Activated B cell treated with CpG ODN at 0.5 μM for 24 hours (primary cell): ENCODE measurements at regions of chr11 and their contacts with region 1.

Region 1: DNA sequence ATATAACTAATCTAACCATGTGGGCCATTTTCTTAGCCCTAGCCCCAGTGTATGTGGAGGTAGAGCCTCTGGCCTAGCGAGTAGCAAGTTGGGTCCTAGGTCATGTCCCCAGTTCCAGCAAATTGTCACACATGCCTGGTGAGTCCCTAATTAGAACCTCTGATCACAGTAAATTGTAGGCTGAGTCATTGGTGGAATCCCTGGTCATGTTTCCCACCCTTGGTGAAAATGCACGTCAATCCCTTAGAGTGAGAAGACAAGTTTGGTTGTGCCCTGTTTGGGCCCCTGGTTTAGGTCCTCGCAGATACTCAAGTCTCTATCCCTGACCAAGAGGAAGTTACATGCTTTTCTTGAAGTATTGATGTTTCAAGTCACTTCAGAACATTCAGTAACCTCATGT is 46.7 kb downstream of the ATM start:
- DNase-seq: no peak
- ATAC-seq: no peak
- H3K4me3 Mint-ChIP-seq: no peak overlapping the region
- H3K27ac Mint-ChIP-seq: peak overlapping the region; percentile 7
- H3K4me1 Mint-ChIP-seq: no peaks in the 10 kb centered on the region
- H3K27me3 Mint-ChIP-seq: no peaks in the 10 kb centered on the region
- CTCF ChIP-seq: no peak

Region 2: DNA sequence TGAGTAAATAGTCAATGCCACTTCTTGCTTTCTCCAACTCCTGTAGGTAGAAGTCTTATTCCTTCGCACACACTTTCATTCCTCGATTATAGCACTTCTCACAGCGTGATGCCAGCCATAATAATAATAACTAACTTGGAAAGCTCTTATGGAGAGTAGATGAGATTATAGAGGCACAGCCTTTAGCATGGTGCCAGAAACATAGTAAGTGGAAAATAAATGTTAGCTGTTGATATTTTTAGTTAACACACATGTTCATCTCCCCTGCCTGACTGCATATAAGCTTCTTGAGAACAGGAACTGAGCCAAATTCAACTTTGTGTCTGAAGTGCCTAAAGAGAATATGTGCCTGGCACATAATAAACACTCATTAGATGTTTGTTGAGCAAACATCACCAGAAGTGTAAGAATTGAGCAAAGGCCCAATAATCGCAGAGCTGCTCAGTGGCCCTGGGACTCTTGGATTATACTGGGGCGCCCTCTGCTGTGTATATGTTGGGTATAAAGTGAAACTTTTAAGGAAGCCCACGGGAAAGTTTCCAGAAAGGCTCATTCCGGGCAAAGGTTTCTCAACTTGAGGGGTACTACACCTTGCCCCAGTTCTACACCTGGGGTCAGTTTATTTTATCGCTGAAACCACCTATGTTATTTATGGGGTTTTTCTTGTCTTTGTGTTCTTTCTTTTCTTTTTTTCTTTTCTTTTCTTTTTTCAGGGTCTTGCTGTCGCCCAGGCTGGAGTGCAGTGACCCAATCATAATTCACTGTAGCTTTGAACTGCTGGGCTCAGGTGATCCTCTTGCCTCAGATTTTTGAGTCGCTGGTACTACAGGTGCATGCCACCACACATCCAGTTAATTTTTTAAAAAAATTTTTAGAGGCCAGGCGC is 580.0 kb before region 1 on chr11:
- CTCF ChIA-PET with region 1: no interaction called
- POLR2A ChIA-PET with region 1: no interaction called
- intact Hi-C with region 1: no loop called
- DNase-seq: peak; percentile 18
- ATAC-seq: peak; percentile 47
- H3K4me3 Mint-ChIP-seq: no peak overlapping the region
- H3K27ac Mint-ChIP-seq: no peak overlapping the region
- H3K4me1 Mint-ChIP-seq: peaks cover 3% of the 10 kb centered on the region
- H3K27me3 Mint-ChIP-seq: peaks cover 12% of the 10 kb centered on the region
- CTCF ChIP-seq: no peak

Region 3: DNA sequence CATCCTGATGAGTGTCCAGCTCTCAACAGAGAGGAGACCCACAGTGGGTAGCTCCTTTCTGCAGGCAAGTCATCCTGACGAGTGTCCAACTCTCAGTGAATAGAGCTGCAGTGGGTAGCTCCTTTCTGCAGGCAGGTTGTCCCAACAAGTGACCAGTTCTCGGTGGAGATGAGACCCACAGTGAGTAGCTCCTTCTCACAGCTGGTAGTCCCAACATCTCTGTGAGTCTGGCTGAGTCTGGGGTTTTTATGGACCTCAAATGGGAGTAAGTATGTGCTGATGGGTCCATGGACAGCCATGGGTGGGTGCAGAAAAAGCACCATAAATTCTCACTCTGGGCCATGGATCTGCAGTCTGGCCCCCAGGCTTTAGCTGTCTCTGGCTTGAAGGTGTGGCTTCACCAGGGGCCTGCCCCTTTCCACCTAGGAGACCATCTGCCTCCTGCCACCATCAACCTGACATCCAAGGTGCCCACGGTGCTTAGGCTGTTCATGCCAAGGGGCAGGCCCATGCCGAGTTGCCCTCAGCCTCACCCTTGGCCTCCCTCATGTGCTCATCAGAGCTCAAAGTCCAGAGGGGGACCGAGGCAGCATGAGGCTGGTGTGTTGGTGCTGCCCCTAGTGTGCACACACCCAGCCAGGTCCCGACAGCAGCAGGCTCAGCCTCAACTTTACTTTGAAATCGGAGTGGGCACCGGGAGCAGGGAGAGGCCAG is 62.5 kb before region 1 on chr11:
- CTCF ChIA-PET with region 1: no interaction called
- POLR2A ChIA-PET with region 1: no interaction called
- intact Hi-C with region 1: no loop called
- DNase-seq: no peak
- ATAC-seq: no peak
- H3K4me3 Mint-ChIP-seq: no peak overlapping the region
- H3K27ac Mint-ChIP-seq: no peak overlapping the region
- H3K4me1 Mint-ChIP-seq: peaks cover 22% of the 10 kb centered on the region
- H3K27me3 Mint-ChIP-seq: no peaks in the 10 kb centered on the region
- CTCF ChIP-seq: no peak

Region 4: GRCh38 chr11:108253176-108253575 is 16.4 kb before region 1 on chr11:
- CTCF ChIA-PET with region 1: no interaction called
- POLR2A ChIA-PET with region 1: no interaction called
- intact Hi-C with region 1: loop called (anchors 2 kb)
- DNase-seq: no peak
- ATAC-seq: no peak
- H3K4me3 Mint-ChIP-seq: no peak overlapping the region
- H3K27ac Mint-ChIP-seq: no peak overlapping the region
- H3K4me1 Mint-ChIP-seq: no peaks in the 10 kb centered on the region
- H3K27me3 Mint-ChIP-seq: no peaks in the 10 kb centered on the region
- CTCF ChIP-seq: no peak

Region 5: DNA sequence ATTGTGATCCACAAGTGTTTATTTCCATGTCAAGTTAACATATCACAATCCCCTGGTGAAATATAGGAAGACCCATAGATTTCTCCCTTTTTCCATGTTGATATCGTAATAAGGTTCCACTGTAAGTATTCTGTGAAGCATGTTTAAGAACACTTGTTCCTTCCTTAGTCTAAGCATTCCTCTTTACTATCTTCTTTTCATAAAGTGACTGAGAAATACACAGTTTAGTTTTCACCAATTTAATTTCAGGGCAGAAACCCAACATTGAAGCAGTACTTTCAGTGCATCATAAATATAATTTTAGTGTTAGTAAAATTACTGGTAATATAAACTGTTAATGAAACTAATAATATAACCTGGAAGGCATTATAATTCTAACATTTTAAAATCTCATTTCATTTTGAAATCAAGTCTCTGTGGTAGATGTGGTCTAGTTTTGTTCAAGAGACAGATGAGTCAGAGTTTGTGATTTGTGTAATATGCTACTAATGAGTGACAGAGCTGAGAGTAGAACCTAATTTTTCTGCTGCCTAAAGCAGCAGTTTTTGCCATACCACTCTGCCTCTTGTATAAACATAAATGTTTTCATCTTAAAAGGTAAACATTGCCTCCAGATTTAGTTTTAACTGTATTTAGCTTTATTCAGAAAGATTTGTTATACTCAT is 32.7 kb after region 1 on chr11:
- CTCF ChIA-PET with region 1: no interaction called
- POLR2A ChIA-PET with region 1: no interaction called
- intact Hi-C with region 1: no loop called
- DNase-seq: no peak
- ATAC-seq: no peak
- H3K4me3 Mint-ChIP-seq: no peak overlapping the region
- H3K27ac Mint-ChIP-seq: peak overlapping the region; percentile 64
- H3K4me1 Mint-ChIP-seq: no peaks in the 10 kb centered on the region
- H3K27me3 Mint-ChIP-seq: no peaks in the 10 kb centered on the region
- CTCF ChIP-seq: no peak